ENCODE measurements at regions of chr6 and their contacts with region 1.

Region 1: DNA sequence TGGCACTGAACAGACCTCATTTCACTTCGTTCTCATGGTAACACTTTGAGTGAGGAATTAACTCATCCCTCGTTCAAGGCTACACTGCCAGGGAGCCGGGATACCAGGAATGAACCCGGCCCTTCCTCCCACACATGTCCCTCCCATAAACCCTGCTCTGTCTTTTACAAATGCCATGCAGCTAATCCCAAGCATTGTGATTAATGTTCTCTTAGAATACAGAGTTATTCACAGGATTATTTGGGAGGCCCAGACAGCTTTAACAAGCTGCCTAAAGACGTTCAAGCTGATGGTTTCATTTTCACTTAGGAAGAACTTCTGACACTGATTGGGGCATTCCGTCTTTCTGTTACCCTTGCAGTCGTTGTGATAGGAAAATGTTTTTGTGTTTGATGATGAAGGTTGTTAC is 42.5 kb upstream of the CD83 start:
- DNase-seq: peak; percentile 25
- H3K4me3 Mint-ChIP-seq: peak overlapping the region; percentile 84
- H3K27ac Mint-ChIP-seq: peak overlapping the region; percentile 94
- H3K4me1 Mint-ChIP-seq: peaks cover 68% of the 10 kb centered on the region
- H3K27me3 Mint-ChIP-seq: no peaks in the 10 kb centered on the region

Region 2: GRCh38 chr6:13711733-13712598 is 363.1 kb before region 1 on chr6 and contains the start of gene RANBP9:
- intact Hi-C with region 1: no loop called
- DNase-seq: peak; percentile 86
- H3K4me3 Mint-ChIP-seq: peak within 1 kb of the TSS; percentile 93
- H3K27ac Mint-ChIP-seq: peak within 1 kb of the TSS; percentile 96
- H3K4me1 Mint-ChIP-seq: peaks cover 63% of the 10 kb centered on the region
- H3K27me3 Mint-ChIP-seq: no peaks in the 10 kb centered on the region
- total RNA-seq, gene RANBP9: 58.4 and 60.1 TPM in 2 replicates

Region 3: DNA sequence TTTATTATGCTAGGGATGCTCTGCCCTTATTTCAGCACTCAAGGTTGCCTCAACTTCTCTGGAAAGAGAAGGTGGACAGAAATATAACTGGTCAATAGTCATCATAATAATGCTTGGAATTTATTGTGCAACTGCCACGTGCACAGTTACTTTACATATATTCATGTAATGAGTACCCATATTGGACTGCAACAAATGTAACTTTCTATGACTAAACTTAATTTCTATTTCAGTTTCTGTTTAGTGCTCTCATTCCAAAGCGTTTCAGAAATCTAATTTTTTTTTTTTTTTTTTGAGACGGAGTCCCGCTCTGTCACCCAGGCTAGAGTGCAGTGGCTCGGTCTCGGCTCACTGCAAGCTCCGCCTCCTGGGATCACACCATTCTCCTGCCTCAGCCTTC is 14.1 kb after region 1 on chr6:
- intact Hi-C with region 1: loop called (anchors 1 kb)
- DNase-seq: no peak
- H3K4me3 Mint-ChIP-seq: no peak overlapping the region
- H3K27ac Mint-ChIP-seq: no peak overlapping the region
- H3K4me1 Mint-ChIP-seq: peaks cover 25% of the 10 kb centered on the region
- H3K27me3 Mint-ChIP-seq: peaks cover 9% of the 10 kb centered on the region

Region 4: DNA sequence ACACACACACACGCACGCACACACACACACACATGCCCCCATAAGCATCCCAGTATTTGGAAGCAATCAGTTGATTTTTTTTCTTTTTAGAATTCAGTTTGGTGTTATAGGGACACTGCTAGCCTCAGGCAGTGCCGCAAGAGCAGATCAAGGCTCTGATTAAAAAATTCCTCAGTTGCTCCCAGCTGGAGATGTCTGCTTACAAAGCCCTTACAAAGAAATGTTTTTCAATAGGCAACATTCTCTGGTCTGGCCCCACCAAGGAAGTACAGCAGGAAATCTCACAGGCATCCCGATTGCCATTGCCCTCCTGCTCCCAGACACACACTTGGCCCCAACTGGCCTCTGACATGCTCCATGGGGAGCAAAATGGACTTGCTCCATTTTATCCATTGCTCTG is 19.6 kb after region 1 on chr6:
- intact Hi-C with region 1: loop called (anchors 1 kb)
- DNase-seq: no peak
- H3K4me3 Mint-ChIP-seq: no peak overlapping the region
- H3K27ac Mint-ChIP-seq: peak overlapping the region; percentile 86
- H3K4me1 Mint-ChIP-seq: peaks cover 44% of the 10 kb centered on the region
- H3K27me3 Mint-ChIP-seq: no peaks in the 10 kb centered on the region

Region 5: DNA sequence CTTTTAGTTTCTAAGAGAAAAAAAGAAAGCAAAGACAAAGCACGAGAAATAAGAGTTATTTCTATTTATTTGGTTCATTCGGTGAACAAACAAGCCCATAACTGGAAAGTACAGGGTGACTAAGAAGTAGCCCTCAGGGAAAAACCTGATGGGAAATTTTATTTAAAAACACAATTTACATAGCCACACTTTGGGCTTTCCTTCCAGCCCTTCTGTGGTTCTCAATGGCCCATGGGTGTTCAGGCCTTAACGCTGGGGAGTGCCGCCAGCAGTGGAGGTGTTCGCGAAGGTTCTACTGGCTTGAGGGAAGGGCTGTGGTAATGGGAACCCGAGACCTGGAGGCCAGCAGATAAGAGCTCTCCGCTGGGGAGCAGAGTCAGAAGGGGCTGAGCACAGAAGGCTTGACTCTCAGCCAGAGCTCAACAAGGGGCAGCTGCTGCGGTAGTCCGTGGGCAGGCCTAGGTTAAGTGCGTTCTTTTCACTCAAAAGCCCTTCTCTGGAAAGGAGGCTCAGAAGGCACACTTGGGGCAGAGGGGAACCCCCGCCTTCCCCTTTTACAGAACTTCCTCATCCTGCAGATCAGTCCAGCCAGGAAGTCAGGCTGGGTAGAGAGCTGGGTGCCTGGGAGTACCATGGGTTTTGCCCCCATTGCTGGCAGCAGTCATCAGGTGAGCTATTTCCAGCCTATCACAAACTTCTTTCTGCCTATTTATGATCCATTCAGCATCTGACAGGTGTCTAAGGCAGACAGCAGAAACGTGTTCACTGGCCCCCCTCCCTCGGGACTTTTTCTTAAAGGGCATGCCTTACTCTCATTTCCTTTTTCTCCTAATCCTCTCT is 33.7 kb after region 1 on chr6:
- intact Hi-C with region 1: loop called (anchors 1 kb)
- DNase-seq: no peak
- H3K4me3 Mint-ChIP-seq: peak overlapping the region; percentile 66
- H3K27ac Mint-ChIP-seq: peak overlapping the region; percentile 88
- H3K4me1 Mint-ChIP-seq: peaks cover 35% of the 10 kb centered on the region
- H3K27me3 Mint-ChIP-seq: peaks cover 15% of the 10 kb centered on the region

Region 6: DNA sequence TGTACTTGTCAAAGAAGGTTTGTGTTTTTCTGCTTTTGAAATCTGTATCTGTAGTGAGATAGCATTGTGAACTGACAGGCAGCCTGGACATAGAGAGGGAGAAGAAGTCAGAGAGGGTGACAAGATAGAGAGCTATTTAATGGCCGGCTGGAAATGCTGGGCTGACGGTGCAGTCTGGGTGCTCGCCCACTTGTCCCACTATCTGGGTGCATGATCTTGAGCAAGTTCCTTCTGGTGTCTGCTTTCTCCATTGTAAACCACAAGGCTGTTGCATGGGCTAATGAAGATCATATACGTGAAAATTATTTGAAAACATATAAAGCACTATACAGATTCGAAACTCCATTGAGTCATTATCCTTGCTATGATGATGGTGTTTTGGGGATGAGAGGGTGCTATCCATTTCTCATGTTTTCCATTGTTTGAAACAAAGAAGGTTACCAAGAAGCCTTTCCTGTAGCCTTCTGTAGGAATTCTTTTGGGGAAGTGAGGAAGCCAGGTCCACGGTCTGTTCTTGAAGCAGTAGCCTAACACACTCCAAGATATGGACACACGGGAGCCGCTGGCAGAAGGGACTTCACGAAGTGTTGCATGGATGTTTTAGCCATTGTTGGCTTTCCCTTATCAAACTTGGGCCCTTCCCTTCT is 60.9 kb after region 1 on chr6:
- intact Hi-C with region 1: no loop called
- DNase-seq: no peak
- H3K4me3 Mint-ChIP-seq: no peak overlapping the region
- H3K27ac Mint-ChIP-seq: no peak overlapping the region
- H3K4me1 Mint-ChIP-seq: peaks cover 5% of the 10 kb centered on the region
- H3K27me3 Mint-ChIP-seq: no peaks in the 10 kb centered on the region